Right lobe of liver (tissue), 6 donors: ENCODE measurements at regions of chr16 and their contacts with region 1.

Region 1: DNA sequence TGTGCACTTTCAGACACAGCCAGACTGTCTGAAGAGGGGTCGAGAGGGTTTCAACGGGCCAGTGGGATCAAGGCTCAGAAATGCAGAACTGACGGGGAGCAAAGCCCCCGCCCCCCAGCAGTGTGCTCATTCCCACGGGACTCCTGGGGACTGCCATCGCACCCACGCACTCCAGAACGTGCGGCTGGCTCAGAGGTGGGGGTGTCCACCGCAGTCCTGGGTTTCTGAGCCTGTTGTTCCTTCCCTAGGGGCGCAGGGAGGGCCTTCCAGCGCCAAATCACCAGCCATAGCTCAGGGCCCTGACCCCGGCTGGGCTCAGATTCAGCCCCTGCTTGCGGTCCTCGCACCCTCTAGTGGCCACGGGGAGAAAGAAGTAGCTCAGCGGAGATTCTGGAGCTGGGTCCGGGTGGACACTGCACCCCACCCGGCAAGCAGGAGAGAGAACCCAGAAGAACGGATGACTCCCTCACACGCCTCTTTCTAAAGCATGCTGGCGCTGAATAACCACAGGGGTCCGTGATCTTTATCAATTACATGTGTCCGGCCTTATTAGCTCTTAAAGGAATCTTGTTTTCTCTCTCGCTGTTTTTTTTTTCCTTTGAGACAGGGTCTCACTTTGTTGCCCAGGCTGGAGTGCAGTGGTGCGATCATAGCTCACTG is 45.0 kb upstream of the USP7 start:
- DNase-seq: peak; percentile 78 to 82 (median 80)
- ATAC-seq: peak; percentile 97 to 99 (median 98)
- H3K4me3 ChIP-seq: peak overlapping the region in 2 of 3 donors; percentile 20 to 31
- H3K27ac ChIP-seq: no peak overlapping the region
- H3K4me1 ChIP-seq: peaks cover 0 to 14% (median 0%) of the 10 kb centered on the region in 4 donors
- H3K27me3 ChIP-seq: no peaks in the 10 kb centered on the region
- CTCF ChIP-seq: peak; percentile 77 to 89 (median 84)
- POLR2A ChIP-seq: no peak

Region 2: DNA sequence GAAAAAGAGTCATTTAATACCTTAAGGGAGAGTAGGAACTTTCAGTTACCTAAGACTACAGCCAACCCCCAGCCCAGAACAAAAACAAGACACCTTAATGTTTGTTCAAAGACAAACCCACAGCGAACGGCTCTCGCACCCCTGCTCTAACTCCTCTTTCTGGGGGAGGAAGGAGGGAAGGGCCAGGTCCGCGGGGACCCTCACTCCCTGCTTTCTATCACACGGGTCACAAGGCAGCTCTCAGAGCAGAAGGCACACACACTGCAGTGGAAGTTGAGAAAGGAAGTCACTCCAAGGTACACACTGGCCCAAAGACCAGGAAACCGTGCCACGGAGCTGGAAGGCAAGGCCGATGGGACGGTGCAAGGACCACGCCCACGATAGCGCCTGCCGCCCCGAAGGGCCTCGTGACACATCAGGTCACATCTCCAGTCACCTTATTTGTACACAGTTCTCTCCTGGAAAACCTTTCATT is 116.6 kb before region 1 on chr16:
- intact Hi-C with region 1: loop called in 1 of 2 experiments (anchors 10 kb)
- DNase-seq: peak in 1 of 3 donors; percentile 42
- ATAC-seq: no peak
- H3K4me3 ChIP-seq: no peak overlapping the region
- H3K27ac ChIP-seq: no peak overlapping the region
- H3K4me1 ChIP-seq: no peaks in the 10 kb centered on the region
- H3K27me3 ChIP-seq: no peaks in the 10 kb centered on the region
- CTCF ChIP-seq: no peak
- POLR2A ChIP-seq: no peak

Region 3: GRCh38 chr16:9123871-9124270 is 115.1 kb after region 1 on chr16:
- intact Hi-C with region 1: no loop called
- DNase-seq: peak; percentile 60 to 76 (median 65)
- ATAC-seq: peak; percentile 41 to 76 (median 54)
- H3K4me3 ChIP-seq: no peak overlapping the region
- H3K27ac ChIP-seq: no peak overlapping the region
- H3K4me1 ChIP-seq: peaks cover 0 to 3% (median 0%) of the 10 kb centered on the region in 4 donors
- H3K27me3 ChIP-seq: no peaks in the 10 kb centered on the region
- CTCF ChIP-seq: no peak
- POLR2A ChIP-seq: no peak